Caco-2 (cell line): ENCODE measurements at regions of chr2 and their contacts with region 1.

Region 1: GRCh38 chr2:64914735-64915509 is 74.3 kb upstream of the SLC1A4 start:
- DNase-seq: peak in 1 of 2 experiments; percentile 13
- H3K4me3 ChIP-seq: no peak overlapping the region
- H3K4me3 Mint-ChIP-seq: no peak overlapping the region
- H3K27ac Mint-ChIP-seq: no peak overlapping the region
- H3K4me1 ChIP-seq: peaks cover 4% of the 10 kb centered on the region; the same call in 1 of the 2 replicates
- H3K4me1 Mint-ChIP-seq: peaks cover 19% of the 10 kb centered on the region
- H3K27me3 ChIP-seq: no peaks in the 10 kb centered on the region
- H3K27me3 Mint-ChIP-seq: no peaks in the 10 kb centered on the region
- CTCF ChIP-seq: no peak

Region 2: DNA sequence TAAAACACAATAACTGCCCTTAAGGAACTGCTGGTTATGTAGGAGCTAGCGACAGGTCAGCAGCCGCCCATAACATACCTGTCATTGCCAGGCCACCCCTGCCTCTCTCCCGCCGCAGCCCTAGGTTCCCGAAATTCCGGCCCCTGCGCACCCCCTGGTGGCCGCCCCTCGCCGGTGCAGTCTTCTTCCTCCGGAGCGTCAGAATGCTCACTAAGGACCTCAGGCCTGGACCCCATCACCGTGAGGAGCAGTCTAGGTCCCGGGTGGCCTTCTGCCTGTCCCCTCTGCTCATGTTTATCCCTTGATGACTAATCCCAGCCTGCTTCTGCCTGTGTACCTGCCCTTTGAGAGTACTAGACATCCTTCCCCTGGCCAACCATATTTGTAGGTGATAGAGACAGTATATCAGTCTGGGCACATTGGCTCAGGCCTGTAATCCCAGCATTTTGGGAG is 41.4 kb before region 1 on chr2:
- CTCF ChIA-PET with region 1: interaction called, 6 read pairs
- POLR2A ChIA-PET with region 1: no interaction called
- intact Hi-C with region 1: loop called (anchors 1 kb)
- DNase-seq: peak; percentile 78 to 91
- H3K4me3 ChIP-seq: no peak overlapping the region
- H3K4me3 Mint-ChIP-seq: no peak overlapping the region
- H3K27ac Mint-ChIP-seq: no peak overlapping the region
- H3K4me1 ChIP-seq: peaks cover 14% of the 10 kb centered on the region; the same call in 1 of the 2 replicates
- H3K4me1 Mint-ChIP-seq: peaks cover 14% of the 10 kb centered on the region
- H3K27me3 ChIP-seq: no peaks in the 10 kb centered on the region
- H3K27me3 Mint-ChIP-seq: no peaks in the 10 kb centered on the region
- CTCF ChIP-seq: peak; percentile 91 to 96

Region 3: GRCh38 chr2:64947885-64948284 is 33.0 kb after region 1 on chr2:
- CTCF ChIA-PET with region 1: no interaction called
- POLR2A ChIA-PET with region 1: no interaction called
- intact Hi-C with region 1: no loop called
- DNase-seq: no peak
- H3K4me3 ChIP-seq: no peak overlapping the region
- H3K4me3 Mint-ChIP-seq: no peak overlapping the region
- H3K27ac Mint-ChIP-seq: no peak overlapping the region
- H3K4me1 ChIP-seq: peaks cover 7% of the 10 kb centered on the region; the same call in 1 of the 2 replicates
- H3K4me1 Mint-ChIP-seq: peaks cover 20% of the 10 kb centered on the region
- H3K27me3 ChIP-seq: no peaks in the 10 kb centered on the region; the same call in 1 of the 2 replicates
- H3K27me3 Mint-ChIP-seq: no peaks in the 10 kb centered on the region
- CTCF ChIP-seq: no peak

Region 4: GRCh38 chr2:64975232-64975821 is 60.4 kb after region 1 on chr2:
- CTCF ChIA-PET with region 1: no interaction called
- POLR2A ChIA-PET with region 1: no interaction called
- intact Hi-C with region 1: no loop called
- DNase-seq: no peak
- H3K4me3 ChIP-seq: no peak overlapping the region
- H3K4me3 Mint-ChIP-seq: no peak overlapping the region
- H3K27ac Mint-ChIP-seq: no peak overlapping the region
- H3K4me1 ChIP-seq: no peaks in the 10 kb centered on the region
- H3K4me1 Mint-ChIP-seq: peaks cover 11% of the 10 kb centered on the region
- H3K27me3 ChIP-seq: no peaks in the 10 kb centered on the region
- H3K27me3 Mint-ChIP-seq: no peaks in the 10 kb centered on the region
- CTCF ChIP-seq: no peak

Region 5: DNA sequence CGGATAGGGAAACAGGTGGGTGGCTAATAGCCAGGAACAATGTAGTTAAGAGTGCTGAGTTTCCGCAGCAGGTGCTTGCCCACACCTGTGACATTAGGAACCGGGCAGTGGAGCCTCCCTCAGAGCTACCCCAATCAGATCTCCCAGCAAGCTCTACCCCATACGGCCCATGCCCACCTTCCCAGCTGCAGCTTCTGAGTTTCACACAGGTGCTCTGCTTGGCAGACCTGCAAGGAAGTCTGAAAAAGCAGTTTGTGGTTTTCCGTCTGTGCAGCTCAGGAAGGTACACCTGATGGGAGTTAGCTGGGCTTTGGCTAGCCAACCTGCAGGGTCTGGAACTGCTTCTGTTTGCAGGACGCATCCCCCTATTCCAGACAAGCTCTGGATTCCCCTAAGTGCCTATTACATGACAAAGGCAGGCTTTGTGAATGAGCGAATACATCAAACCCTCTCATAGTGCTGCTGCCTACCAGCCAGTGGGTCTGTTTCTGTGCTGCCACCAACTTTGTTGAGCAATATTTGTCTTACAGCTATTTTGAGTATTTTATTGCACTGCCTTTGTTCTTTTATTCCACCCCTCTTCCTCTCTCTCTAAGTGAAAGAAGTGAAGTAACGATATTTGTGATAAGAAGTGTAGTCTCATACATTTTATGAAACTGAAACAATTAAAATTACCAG is 116.6 kb after region 1 on chr2:
- CTCF ChIA-PET with region 1: interaction called, 25 read pairs
- POLR2A ChIA-PET with region 1: interaction called, 6 read pairs
- intact Hi-C with region 1: loop called (anchors 1 kb)
- DNase-seq: peak in 1 of 2 experiments; percentile 34
- H3K4me3 ChIP-seq: no peak overlapping the region
- H3K4me3 Mint-ChIP-seq: peak overlapping the region; percentile 49
- H3K27ac Mint-ChIP-seq: peak overlapping the region; percentile 70
- H3K4me1 ChIP-seq: peaks cover 17% of the 10 kb centered on the region
- H3K4me1 Mint-ChIP-seq: peaks cover 15% of the 10 kb centered on the region
- H3K27me3 ChIP-seq: no peaks in the 10 kb centered on the region
- H3K27me3 Mint-ChIP-seq: no peaks in the 10 kb centered on the region
- CTCF ChIP-seq: no peak

Region 6: GRCh38 chr2:65169760-65170136 is 254.8 kb after region 1 on chr2:
- CTCF ChIA-PET with region 1: no interaction called
- POLR2A ChIA-PET with region 1: no interaction called
- intact Hi-C with region 1: loop called (anchors 1 kb)
- DNase-seq: no peak
- H3K4me3 ChIP-seq: no peak overlapping the region
- H3K4me3 Mint-ChIP-seq: no peak overlapping the region
- H3K27ac Mint-ChIP-seq: peak overlapping the region; percentile 67
- H3K4me1 ChIP-seq: peaks cover 19% of the 10 kb centered on the region
- H3K4me1 Mint-ChIP-seq: no peaks in the 10 kb centered on the region
- H3K27me3 ChIP-seq: no peaks in the 10 kb centered on the region
- H3K27me3 Mint-ChIP-seq: no peaks in the 10 kb centered on the region
- CTCF ChIP-seq: no peak

Region 7: GRCh38 chr2:65576861-65577601 is 662.1 kb after region 1 on chr2:
- CTCF ChIA-PET with region 1: no interaction called
- POLR2A ChIA-PET with region 1: no interaction called
- intact Hi-C with region 1: loop called (anchors 5 kb)
- DNase-seq: peak in 1 of 2 experiments; percentile 57
- H3K4me3 ChIP-seq: no peak overlapping the region
- H3K4me3 Mint-ChIP-seq: peak overlapping the region; percentile 15
- H3K27ac Mint-ChIP-seq: peak overlapping the region; percentile 87
- H3K4me1 ChIP-seq: peaks cover 12% of the 10 kb centered on the region
- H3K4me1 Mint-ChIP-seq: peaks cover 7% of the 10 kb centered on the region
- H3K27me3 ChIP-seq: no peaks in the 10 kb centered on the region
- H3K27me3 Mint-ChIP-seq: no peaks in the 10 kb centered on the region
- CTCF ChIP-seq: no peak